Heart right ventricle (tissue), 16 donors: ENCODE measurements at regions of chr9 and their contacts with region 1.

Region 1: DNA sequence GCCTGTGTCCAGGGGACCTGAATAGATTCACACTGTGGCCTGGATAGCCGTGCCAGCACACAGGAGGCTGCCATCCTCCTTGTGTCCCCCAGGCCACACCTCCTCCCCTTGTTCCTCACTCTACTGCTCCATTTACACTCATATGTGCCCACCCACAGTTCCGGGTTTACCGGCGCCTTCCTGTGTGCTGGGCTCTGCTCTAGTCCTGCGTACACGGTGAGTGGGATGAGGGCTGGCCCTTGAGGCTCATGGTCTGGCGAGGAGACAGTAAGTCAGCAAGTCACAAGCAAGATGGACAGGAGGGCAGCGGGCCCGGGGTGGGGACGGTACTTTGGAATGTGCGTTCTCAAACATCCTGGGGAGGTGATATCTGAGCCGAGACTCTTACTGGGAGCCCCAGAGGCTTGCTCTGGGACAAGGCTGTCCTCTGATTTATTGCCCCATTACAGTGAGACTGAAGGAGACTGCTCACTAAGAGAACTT is 32.4 kb upstream of the NXNL2 start:
- DNase-seq: no peak
- ATAC-seq: no peak
- H3K4me3 ChIP-seq: no peak overlapping the region
- H3K27ac ChIP-seq: no peak overlapping the region
- H3K4me1 ChIP-seq: no peaks in the 10 kb centered on the region
- H3K27me3 ChIP-seq: no peaks in the 10 kb centered on the region
- CTCF ChIP-seq: no peak

Region 2: GRCh38 chr9:87479801-87480201 is 1022.8 kb before region 1 on chr9:
- intact Hi-C with region 1: no loop called
- DNase-seq: peak in 1 of 2 donors; percentile 29
- ATAC-seq: peak in 5 of 8 donors; percentile 39 to 71 (median 55)
- H3K4me3 ChIP-seq: no peak overlapping the region
- H3K27ac ChIP-seq: peak overlapping the region in 1 of 10 donors; percentile 53
- H3K4me1 ChIP-seq: peaks cover 0 to 5% (median 0%) of the 10 kb centered on the region in 9 donors
- H3K27me3 ChIP-seq: peaks cover 0 to 3% (median 0%) of the 10 kb centered on the region in 7 donors
- CTCF ChIP-seq: no peak

Region 3: DNA sequence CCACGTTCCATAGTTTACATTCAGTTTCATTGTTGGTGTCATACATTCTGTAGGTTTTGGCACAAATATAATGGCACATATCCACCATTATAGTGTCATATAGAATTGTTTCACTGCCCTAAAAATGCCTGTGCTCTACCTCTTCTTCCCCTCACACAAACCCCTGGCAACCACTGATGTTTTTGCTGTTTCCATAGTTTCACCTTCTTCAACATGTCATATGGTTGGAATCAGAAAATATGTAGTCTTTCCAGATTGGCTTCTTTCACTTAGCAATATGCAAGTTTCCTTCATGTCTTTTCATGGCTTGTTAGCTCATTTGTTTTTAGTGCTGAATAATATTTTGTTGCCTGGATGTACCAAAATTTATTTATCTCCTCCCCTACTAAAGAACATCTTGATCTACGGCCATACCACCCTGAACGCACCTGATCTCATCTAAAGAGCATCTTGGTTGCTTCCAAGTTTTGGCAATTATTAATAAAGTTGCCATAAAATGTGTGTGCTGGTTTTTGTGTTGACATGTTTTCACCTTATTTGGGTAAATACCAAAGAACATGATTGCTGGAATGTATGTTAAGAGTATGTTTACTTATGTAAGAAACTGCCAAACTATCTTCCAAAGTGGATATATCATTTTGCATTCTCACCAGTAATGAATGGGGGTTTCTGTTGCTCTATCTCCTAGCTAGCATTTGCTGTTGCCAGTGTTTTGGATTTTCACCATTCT is 511.3 kb before region 1 on chr9:
- intact Hi-C with region 1: no loop called
- DNase-seq: no peak
- ATAC-seq: no peak
- H3K4me3 ChIP-seq: no peak overlapping the region
- H3K27ac ChIP-seq: no peak overlapping the region
- H3K4me1 ChIP-seq: no peaks in the 10 kb centered on the region
- H3K27me3 ChIP-seq: peaks cover 0 to 12% (median 6%) of the 10 kb centered on the region in 7 donors
- CTCF ChIP-seq: no peak

Region 4: DNA sequence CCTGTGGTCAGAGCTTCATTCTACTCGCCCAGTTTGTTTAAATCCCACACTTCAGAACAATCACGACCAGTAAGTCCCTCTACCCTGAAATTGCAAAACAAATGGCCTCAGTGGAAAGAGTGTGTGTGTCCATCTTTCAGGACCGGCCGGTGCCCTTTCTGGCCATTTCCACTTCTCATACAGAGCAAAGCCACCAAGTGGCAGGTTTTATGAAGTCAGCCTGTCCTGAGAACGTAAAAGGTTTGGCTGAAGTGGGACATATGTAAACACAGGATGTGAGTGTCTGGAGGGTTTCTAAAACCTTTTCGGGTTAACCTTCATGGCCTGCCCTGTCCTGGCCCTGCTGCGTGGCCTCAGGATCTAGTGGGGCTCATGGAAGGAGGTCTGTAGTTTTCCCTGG is 57.1 kb after region 1 on chr9:
- intact Hi-C with region 1: loop called in 1 of 10 experiments (anchors 10 kb)
- DNase-seq: no peak
- ATAC-seq: peak in 1 of 8 donors; percentile 29
- H3K4me3 ChIP-seq: no peak overlapping the region
- H3K27ac ChIP-seq: no peak overlapping the region
- H3K4me1 ChIP-seq: no peaks in the 10 kb centered on the region
- H3K27me3 ChIP-seq: no peaks in the 10 kb centered on the region
- CTCF ChIP-seq: no peak